Activated naive CD4-positive, alpha-beta T cell treated with anti-CD3 and anti-CD28 coated beads for 36 hours (primary cell): ENCODE measurements at regions of chr2 and their contacts with region 1.

Region 1: DNA sequence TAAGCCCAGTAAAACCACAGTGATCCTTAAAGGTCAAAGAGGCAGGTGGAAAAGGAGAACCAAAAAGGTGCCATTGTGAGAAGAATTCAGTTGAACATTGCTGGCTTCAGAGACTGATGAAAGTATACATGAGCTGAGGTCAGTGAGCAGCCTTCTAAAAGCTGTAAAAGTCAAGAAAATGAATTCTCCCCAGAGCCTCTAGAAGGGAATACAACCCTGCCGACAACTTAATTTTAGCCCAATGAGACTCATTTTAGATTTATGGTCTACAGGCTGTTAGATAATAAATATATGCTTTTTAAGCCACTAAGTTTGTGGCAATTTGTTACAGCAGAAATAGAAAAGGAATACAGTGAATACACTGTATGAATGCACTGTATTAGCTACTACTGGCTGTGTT is 911.4 kb downstream of the TRIB2 start:
- DNase-seq: no peak
- H3K4me3 Mint-ChIP-seq: no peak overlapping the region
- H3K27ac Mint-ChIP-seq: no peak overlapping the region
- H3K4me1 Mint-ChIP-seq: no peaks in the 10 kb centered on the region
- H3K27me3 Mint-ChIP-seq: no peaks in the 10 kb centered on the region

Region 2: DNA sequence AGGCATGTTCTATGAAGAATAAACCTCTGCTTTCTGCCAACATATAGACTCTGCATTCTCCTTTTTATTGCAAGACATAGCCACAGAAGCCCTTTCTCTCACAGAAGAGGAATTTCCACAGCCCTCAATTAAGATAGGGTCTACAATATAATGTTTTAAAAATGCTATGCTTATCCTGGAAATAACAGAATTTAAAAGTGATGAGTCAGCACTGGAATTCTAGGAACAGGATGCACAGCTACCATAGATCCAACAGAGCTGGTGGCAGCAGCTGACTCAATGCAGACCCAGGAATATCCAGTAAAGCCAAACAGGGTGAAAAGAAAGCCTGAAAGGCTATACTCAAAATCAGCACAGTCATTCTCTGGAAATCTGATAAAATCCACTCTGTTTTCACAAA is 44.5 kb before region 1 on chr2:
- CTCF ChIA-PET with region 1: interaction called, 3 read pairs
- intact Hi-C with region 1: loop called (anchors 1 kb)
- DNase-seq: no peak
- H3K4me3 Mint-ChIP-seq: no peak overlapping the region
- H3K27ac Mint-ChIP-seq: no peak overlapping the region
- H3K4me1 Mint-ChIP-seq: no peaks in the 10 kb centered on the region
- H3K27me3 Mint-ChIP-seq: no peaks in the 10 kb centered on the region

Region 3: DNA sequence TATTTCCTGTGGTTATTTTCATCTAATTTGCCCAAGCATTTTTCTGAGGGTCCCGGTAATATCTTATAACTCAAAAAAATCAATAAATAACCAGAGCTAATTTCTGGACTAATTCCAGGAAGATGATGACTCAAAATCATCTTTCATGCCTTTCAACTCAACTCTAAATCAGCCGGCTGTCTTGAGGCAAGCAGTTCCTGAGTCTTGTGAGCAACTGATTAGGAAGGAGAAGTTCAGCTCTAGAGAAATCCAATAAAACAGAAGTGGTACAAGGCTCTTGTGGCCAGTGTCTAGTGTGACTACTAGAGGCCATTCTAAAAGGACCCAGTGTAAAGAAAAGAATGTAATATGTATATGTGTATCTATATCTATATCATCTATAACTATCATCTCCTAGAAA is 21.0 kb before region 1 on chr2:
- CTCF ChIA-PET with region 1: no interaction called
- intact Hi-C with region 1: no loop called
- DNase-seq: no peak
- H3K4me3 Mint-ChIP-seq: no peak overlapping the region
- H3K27ac Mint-ChIP-seq: no peak overlapping the region
- H3K4me1 Mint-ChIP-seq: no peaks in the 10 kb centered on the region
- H3K27me3 Mint-ChIP-seq: no peaks in the 10 kb centered on the region